B cell (primary cell): ENCODE measurements at regions of chr9 and their contacts with region 1.

Region 1: DNA sequence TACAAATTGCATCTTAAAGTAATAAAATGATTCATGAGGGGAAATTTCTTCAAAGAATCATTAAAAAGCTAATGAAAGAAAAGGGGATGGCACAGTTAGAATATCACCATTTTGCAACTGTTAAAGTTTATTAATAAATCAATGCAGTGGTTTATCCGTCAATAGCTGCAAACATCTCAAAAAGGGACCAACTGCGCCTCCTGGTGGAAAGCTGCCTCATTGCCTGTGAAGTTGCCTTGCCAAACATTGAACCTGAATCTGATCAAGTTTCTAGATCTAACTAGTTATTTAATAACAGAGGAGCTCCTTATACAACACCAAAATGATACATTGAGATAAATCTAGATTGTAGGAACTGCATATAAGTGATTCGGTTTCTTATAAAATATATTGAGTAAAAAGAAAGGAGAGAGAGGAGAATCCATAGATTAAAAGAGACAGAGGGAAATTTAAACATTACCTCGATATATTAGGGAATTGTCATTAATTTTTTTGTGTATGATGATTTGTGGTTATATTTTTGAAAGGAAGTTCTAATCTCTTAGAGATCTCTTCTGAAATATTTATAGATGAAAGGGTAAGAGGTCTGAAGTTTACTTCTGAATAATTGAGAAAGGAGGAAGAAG is 6.9 kb upstream of the NDUFB6 start:
- DNase-seq: peak; percentile 78
- ATAC-seq: peak; percentile 71
- H3K4me3 ChIP-seq: no peak overlapping the region
- H3K4me3 Mint-ChIP-seq: no peak overlapping the region
- H3K27ac ChIP-seq: no peak overlapping the region
- H3K27ac Mint-ChIP-seq: no peak overlapping the region
- H3K4me1 ChIP-seq: no peaks in the 10 kb centered on the region
- H3K4me1 Mint-ChIP-seq: no peaks in the 10 kb centered on the region
- H3K27me3 ChIP-seq: peaks cover 0 to 9% (median 4%) of the 10 kb centered on the region in 4 experiments
- H3K27me3 Mint-ChIP-seq: peaks cover 35% of the 10 kb centered on the region
- CTCF ChIP-seq: peak; percentile 99

Region 2: GRCh38 chr9:32384364-32385151 is 195.3 kb before region 1 on chr9 and contains the start of gene ACO1:
- CTCF ChIA-PET with region 1: interaction called, 522 read pairs
- POLR2A ChIA-PET with region 1: interaction called, 4 read pairs
- intact Hi-C with region 1: loop called (anchors 1 kb)
- DNase-seq: peak; percentile 91
- ATAC-seq: peak; percentile 99
- H3K4me3 ChIP-seq: peak within 1 kb of the TSS; percentile 52 to 89 (median 84)
- H3K4me3 Mint-ChIP-seq: peak within 1 kb of the TSS; percentile 90
- H3K27ac ChIP-seq: peak within 1 kb of the TSS; percentile 16 to 61
- H3K27ac Mint-ChIP-seq: peak within 1 kb of the TSS; percentile 78
- H3K4me1 ChIP-seq: peaks cover 10 to 17% of the 10 kb centered on the region in 2 donors
- H3K4me1 Mint-ChIP-seq: peaks cover 8% of the 10 kb centered on the region
- H3K27me3 ChIP-seq: peaks cover 0 to 29% (median 15%) of the 10 kb centered on the region in 4 experiments
- H3K27me3 Mint-ChIP-seq: peaks cover 24% of the 10 kb centered on the region
- CTCF ChIP-seq: no peak
- total RNA-seq, gene ACO1: 9.1 and 9.9 TPM in 2 replicates

Region 3: DNA sequence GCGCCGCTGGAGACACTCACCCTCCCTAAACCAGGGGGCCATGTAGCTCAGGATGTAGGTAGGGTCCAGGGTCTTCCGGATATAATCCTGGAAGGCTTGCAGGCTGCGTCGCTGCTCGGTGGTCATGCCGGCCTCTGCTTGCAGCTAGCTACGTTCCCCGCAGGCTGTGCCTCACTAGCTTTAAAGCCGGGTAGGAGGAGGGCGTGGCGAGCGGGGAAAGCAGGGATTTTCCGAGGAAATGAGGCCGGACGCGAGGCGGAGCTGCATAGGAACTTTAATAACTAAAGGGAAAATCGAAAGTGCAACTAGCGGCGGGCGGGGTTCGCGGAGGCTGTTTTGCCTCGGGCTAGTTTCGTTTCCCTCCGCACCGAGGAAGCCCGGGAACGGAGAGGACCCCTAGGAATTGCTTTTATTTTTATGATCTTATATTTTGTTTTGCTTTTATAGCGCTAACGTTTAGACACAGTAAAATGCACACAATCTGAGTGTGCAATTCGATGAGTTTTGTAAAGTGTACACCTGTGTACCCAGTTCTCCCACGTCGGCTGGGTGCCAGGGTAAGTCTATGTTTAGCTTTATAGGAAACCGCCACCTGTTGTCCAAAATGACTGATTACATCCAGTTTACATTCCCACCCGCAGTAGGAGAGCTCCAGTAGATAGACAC is 53.6 kb before region 1 on chr9 and contains the start of gene RIGI:
- CTCF ChIA-PET with region 1: interaction called, 18 read pairs
- POLR2A ChIA-PET with region 1: no interaction called
- intact Hi-C with region 1: no loop called
- DNase-seq: peak; percentile 82
- ATAC-seq: peak; percentile 78
- H3K4me3 ChIP-seq: peak within 1 kb of the TSS; percentile 73 to 98 (median 84)
- H3K4me3 Mint-ChIP-seq: peak within 1 kb of the TSS; percentile 95
- H3K27ac ChIP-seq: peak within 1 kb of the TSS; percentile 73 to 74
- H3K27ac Mint-ChIP-seq: peak within 1 kb of the TSS; percentile 93
- H3K4me1 ChIP-seq: peaks cover 27 to 31% of the 10 kb centered on the region in 2 donors
- H3K4me1 Mint-ChIP-seq: peaks cover 54% of the 10 kb centered on the region
- H3K27me3 ChIP-seq: no peaks in the 10 kb centered on the region
- H3K27me3 Mint-ChIP-seq: no peaks in the 10 kb centered on the region
- CTCF ChIP-seq: peak; percentile 59
- total RNA-seq, gene RIGI: 24.9 and 26.3 TPM in 2 replicates

Region 4: GRCh38 chr9:32550562-32551433 is 29.0 kb before region 1 on chr9:
- CTCF ChIA-PET with region 1: interaction called, 30 read pairs
- POLR2A ChIA-PET with region 1: no interaction called
- intact Hi-C with region 1: no loop called
- DNase-seq: peak; percentile 97
- ATAC-seq: peak; percentile 84
- H3K4me3 ChIP-seq: peak overlapping the region; percentile 86 to 98 (median 87)
- H3K4me3 Mint-ChIP-seq: peak overlapping the region; percentile 91
- H3K27ac ChIP-seq: peak overlapping the region; percentile 89 to 92
- H3K27ac Mint-ChIP-seq: peak overlapping the region; percentile 91
- H3K4me1 ChIP-seq: peaks cover 14 to 15% of the 10 kb centered on the region in 2 donors
- H3K4me1 Mint-ChIP-seq: peaks cover 34% of the 10 kb centered on the region
- H3K27me3 ChIP-seq: no peaks in the 10 kb centered on the region
- H3K27me3 Mint-ChIP-seq: no peaks in the 10 kb centered on the region
- CTCF ChIP-seq: peak; percentile 5

Region 5: DNA sequence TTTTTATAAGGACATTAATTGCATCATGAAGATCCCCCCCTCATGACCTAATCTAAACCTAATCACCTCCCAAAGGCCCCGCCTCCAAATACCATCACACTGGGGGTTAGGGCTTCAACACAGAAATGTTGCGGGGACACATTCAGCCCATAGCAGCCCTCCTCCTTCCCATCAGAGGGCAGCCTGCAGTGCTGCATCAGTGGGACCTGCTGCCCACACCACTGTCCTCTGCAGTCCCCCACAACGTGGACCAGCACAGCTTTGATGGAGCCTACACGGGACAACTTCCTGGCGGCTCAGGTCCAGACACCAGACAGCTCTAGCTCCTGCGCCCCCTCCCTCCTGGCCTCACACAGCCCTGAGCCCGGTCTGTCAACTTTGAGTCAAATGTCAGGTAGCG is 351.3 kb after region 1 on chr9:
- CTCF ChIA-PET with region 1: no interaction called
- POLR2A ChIA-PET with region 1: no interaction called
- intact Hi-C with region 1: no loop called
- DNase-seq: no peak
- ATAC-seq: no peak
- H3K4me3 ChIP-seq: no peak overlapping the region
- H3K4me3 Mint-ChIP-seq: no peak overlapping the region
- H3K27ac ChIP-seq: no peak overlapping the region
- H3K27ac Mint-ChIP-seq: no peak overlapping the region
- H3K4me1 ChIP-seq: no peaks in the 10 kb centered on the region
- H3K4me1 Mint-ChIP-seq: no peaks in the 10 kb centered on the region
- H3K27me3 ChIP-seq: no peaks in the 10 kb centered on the region
- H3K27me3 Mint-ChIP-seq: peaks cover 8% of the 10 kb centered on the region
- CTCF ChIP-seq: no peak

Region 6: GRCh38 chr9:32968101-32969011 is 388.5 kb after region 1 on chr9:
- CTCF ChIA-PET with region 1: interaction called, 74 read pairs
- POLR2A ChIA-PET with region 1: interaction called, 8 read pairs
- intact Hi-C with region 1: loop called (anchors 1 kb)
- DNase-seq: peak; percentile 62
- ATAC-seq: no peak
- H3K4me3 ChIP-seq: no peak overlapping the region
- H3K4me3 Mint-ChIP-seq: no peak overlapping the region
- H3K27ac ChIP-seq: no peak overlapping the region
- H3K27ac Mint-ChIP-seq: no peak overlapping the region
- H3K4me1 ChIP-seq: no peaks in the 10 kb centered on the region
- H3K4me1 Mint-ChIP-seq: no peaks in the 10 kb centered on the region
- H3K27me3 ChIP-seq: no peaks in the 10 kb centered on the region
- H3K27me3 Mint-ChIP-seq: no peaks in the 10 kb centered on the region
- CTCF ChIP-seq: peak; percentile 92